MCF 10A (cell line): ENCODE measurements at regions of chr4 and their contacts with region 1.

Region 1: GRCh38 chr4:5050520-5051277 is 581 bp upstream of the STK32B start:
- DNase-seq: peak; percentile 68
- H3K4me3 Mint-ChIP-seq: peak overlapping the region; percentile 68
- H3K27ac Mint-ChIP-seq: no peak overlapping the region
- H3K4me1 Mint-ChIP-seq: no peaks in the 10 kb centered on the region
- H3K27me3 Mint-ChIP-seq: no peaks in the 10 kb centered on the region
- CTCF ChIP-seq: peak; percentile 72

Region 2: GRCh38 chr4:4937926-4938325 is 112.8 kb before region 1 on chr4:
- CTCF ChIA-PET with region 1: no interaction called
- POLR2A ChIA-PET with region 1: no interaction called
- intact Hi-C with region 1: no loop called
- DNase-seq: no peak
- H3K4me3 Mint-ChIP-seq: no peak overlapping the region
- H3K27ac Mint-ChIP-seq: no peak overlapping the region
- H3K4me1 Mint-ChIP-seq: peaks cover 8% of the 10 kb centered on the region
- H3K27me3 Mint-ChIP-seq: peaks cover 12% of the 10 kb centered on the region
- CTCF ChIP-seq: no peak

Region 3: DNA sequence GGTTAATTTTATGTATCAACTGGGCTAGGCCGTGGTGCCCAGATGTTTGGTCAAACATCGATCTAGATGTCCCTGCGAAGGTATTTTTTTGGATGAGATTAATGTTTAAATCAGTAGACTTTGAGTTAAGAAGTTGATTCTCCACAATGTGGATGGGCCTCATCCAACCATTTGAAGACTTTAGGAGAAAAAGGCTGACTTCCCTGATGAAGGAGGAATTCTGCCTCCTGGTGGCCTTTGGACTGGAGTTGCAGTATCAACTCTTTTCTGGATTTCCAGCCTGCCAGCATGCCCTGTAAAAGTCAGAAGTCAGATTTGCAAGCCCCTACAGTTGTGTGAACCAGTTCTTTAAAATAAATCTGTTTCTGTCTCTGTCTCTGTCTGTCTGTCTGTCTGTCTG is 92.0 kb after region 1 on chr4:
- CTCF ChIA-PET with region 1: interaction called, 4 read pairs
- POLR2A ChIA-PET with region 1: no interaction called
- intact Hi-C with region 1: loop called (anchors 2 kb)
- DNase-seq: peak; percentile 54
- H3K4me3 Mint-ChIP-seq: no peak overlapping the region
- H3K27ac Mint-ChIP-seq: no peak overlapping the region
- H3K4me1 Mint-ChIP-seq: no peaks in the 10 kb centered on the region
- H3K27me3 Mint-ChIP-seq: peaks cover 61% of the 10 kb centered on the region
- CTCF ChIP-seq: peak; percentile 34

Region 4: DNA sequence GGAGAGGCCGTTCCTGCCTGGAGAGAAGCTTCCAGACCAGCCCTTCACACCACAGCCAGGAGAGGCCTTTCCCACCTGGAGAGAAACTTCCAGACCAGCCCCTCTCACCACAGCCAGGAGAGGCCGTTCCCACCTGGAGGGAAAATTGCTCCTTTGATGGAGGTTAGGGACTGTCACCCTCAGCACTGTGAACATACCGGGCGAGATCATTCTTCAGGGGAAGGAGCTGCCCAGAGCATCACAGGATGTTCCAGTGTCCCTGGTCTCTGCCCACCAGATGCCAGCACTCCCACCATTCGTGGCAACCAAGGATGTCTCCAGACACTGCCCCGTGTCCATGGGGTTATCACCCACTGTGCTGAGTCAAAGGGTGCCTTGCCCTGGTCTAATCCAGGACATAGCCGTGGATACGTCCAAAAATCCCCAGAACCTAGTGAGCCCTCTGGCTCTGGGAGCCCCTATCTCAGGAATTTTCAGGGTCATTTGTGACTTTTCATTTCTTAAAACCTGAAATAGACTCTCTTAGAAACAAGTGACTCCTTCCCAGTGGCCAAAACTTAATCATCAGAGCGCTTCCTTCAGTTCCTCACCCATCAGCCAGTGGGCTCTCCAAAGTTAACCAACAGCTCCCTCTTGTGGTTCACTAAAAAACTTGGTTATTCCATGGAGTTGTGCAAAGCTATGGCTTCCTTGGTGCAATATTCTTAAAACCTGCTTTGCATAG is 762.0 kb after region 1 on chr4:
- CTCF ChIA-PET with region 1: interaction called, 8 read pairs
- POLR2A ChIA-PET with region 1: no interaction called
- intact Hi-C with region 1: loop called (anchors 1 kb)
- DNase-seq: peak; percentile 83
- H3K4me3 Mint-ChIP-seq: no peak overlapping the region
- H3K27ac Mint-ChIP-seq: no peak overlapping the region
- H3K4me1 Mint-ChIP-seq: no peaks in the 10 kb centered on the region
- H3K27me3 Mint-ChIP-seq: no peaks in the 10 kb centered on the region
- CTCF ChIP-seq: peak; percentile 76